Dorsolateral prefrontal cortex (tissue), 120 donors: ENCODE measurements at regions of chr14 and their contacts with region 1.

Region 1: GRCh38 chr14:68862954-68863594 is 70.2 kb upstream of the ZFP36L1 start:
- DNase-seq: peak; percentile 65 to 82 (median 71)
- H3K4me3 ChIP-seq: peak overlapping the region in 14 of 59 donors; percentile 2 to 32 (median 16)
- H3K27ac ChIP-seq: no peak overlapping the region
- H3K27me3 ChIP-seq: no peaks in the 10 kb centered on the region
- CTCF ChIP-seq: peak; percentile 55 to 86 (median 74)

Region 2: DNA sequence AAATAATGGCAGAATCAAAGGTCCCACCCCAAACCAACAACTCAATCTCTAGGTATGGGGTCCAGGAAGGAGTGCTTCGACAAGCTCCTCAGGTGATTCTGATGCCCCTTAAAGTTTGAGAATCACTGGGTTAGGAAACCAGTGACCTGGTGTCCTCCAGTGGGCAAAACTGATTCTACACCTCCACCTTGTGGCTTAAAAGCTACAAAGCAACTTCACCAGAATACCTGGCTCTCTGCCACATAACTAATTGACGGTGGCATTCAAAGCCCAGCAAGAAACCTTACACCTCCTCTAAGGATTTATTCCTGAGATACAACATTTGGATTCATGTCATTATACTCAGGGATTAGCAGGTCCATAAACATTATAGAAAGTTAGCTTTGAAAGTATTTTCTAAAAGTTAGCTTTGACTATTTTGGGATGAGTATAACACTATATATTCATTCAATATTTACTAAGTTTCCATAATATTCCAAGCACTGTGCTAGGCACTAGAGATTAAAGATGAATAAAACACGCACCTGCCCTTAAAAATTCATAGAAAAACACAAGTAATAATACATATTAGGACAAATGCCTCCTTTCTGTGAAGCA is 244.4 kb after region 1 on chr14:
- intact Hi-C with region 1: loop called in 1 of 2 experiments (anchors 5 kb)
- DNase-seq: peak in 1 of 10 donors; percentile 36
- H3K4me3 ChIP-seq: no peak overlapping the region
- H3K27ac ChIP-seq: no peak overlapping the region
- H3K27me3 ChIP-seq: no peaks in the 10 kb centered on the region
- CTCF ChIP-seq: peak in 55 of 56 donors; percentile 28 to 78 (median 56)